CD4-positive, alpha-beta T cell (primary cell): ENCODE measurements at regions of chrX and their contacts with region 1.

Region 1: GRCh38 chrX:56248492-56248891 is 16.3 kb downstream of the KLF8 start:
- DNase-seq: peak; percentile 21 to 74 (median 44)
- ATAC-seq: peak; percentile 78
- H3K4me3 ChIP-seq: no peak overlapping the region
- H3K4me3 Mint-ChIP-seq: no peak overlapping the region
- H3K27ac ChIP-seq: no peak overlapping the region
- H3K27ac Mint-ChIP-seq: no peak overlapping the region
- H3K4me1 ChIP-seq: no peaks in the 10 kb centered on the region
- H3K4me1 Mint-ChIP-seq: peaks cover 11% of the 10 kb centered on the region
- H3K27me3 ChIP-seq: no peaks in the 10 kb centered on the region
- H3K27me3 Mint-ChIP-seq: no peaks in the 10 kb centered on the region
- CTCF ChIP-seq: peak; percentile 64

Region 2: DNA sequence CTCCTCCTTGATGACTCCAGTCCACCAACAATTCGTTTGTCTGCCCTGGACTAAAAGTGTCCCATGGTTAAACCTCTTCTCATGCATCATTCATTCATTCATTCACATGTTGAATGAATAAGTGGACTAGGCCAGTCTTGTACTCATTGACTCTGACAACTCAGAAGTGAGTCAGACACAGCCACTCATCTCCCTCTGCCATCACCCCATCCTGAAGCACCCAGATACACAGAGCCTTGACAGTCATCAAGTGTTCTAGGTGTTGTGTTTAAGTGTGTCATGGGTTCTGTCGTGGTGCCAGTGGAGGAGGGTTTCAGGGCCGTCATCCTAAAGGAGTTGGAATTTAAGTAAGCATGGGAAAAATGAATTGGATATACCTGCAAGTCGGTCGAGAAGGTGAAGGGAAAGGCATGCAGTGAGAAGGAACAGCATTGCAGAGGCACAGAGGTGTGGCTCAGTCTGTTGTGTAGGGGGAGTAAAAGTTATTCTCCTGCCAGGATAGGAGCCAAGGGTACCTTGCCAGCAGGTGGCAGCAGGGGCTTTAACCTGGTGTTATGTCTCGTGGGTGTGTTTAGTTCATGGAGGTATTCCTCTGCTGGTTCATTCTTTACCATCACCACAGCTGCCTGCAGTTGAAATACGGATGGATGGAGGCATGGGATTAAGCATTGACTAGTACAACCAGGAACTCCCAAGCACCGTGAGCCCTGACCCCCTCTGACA is 1422.6 kb before region 1 on chrX:
- CTCF ChIA-PET with region 1: no interaction called
- POLR2A ChIA-PET with region 1: no interaction called
- intact Hi-C with region 1: loop called in 1 of 2 experiments (anchors 10 kb)
- DNase-seq: peak in 12 of 14 experiments; percentile 16 to 47 (median 34)
- ATAC-seq: peak; percentile 71
- H3K4me3 ChIP-seq: no peak overlapping the region
- H3K4me3 Mint-ChIP-seq: no peak overlapping the region
- H3K27ac ChIP-seq: no peak overlapping the region
- H3K27ac Mint-ChIP-seq: no peak overlapping the region
- H3K4me1 ChIP-seq: no peaks in the 10 kb centered on the region
- H3K4me1 Mint-ChIP-seq: no peaks in the 10 kb centered on the region
- H3K27me3 ChIP-seq: no peaks in the 10 kb centered on the region
- H3K27me3 Mint-ChIP-seq: no peaks in the 10 kb centered on the region
- CTCF ChIP-seq: peak; percentile 30

Region 3: GRCh38 chrX:54891573-54891972 is 1356.9 kb before region 1 on chrX:
- CTCF ChIA-PET with region 1: no interaction called
- POLR2A ChIA-PET with region 1: no interaction called
- intact Hi-C with region 1: loop called (anchors 5 to 10 kb)
- DNase-seq: peak in 11 of 14 experiments; percentile 6 to 68 (median 31)
- ATAC-seq: peak; percentile 84
- H3K4me3 ChIP-seq: no peak overlapping the region
- H3K4me3 Mint-ChIP-seq: no peak overlapping the region
- H3K27ac ChIP-seq: no peak overlapping the region
- H3K27ac Mint-ChIP-seq: no peak overlapping the region
- H3K4me1 ChIP-seq: no peaks in the 10 kb centered on the region
- H3K4me1 Mint-ChIP-seq: peaks cover 4% of the 10 kb centered on the region
- H3K27me3 ChIP-seq: peaks cover 0 to 3% of the 10 kb centered on the region in 2 experiments
- H3K27me3 Mint-ChIP-seq: no peaks in the 10 kb centered on the region
- CTCF ChIP-seq: peak; percentile 57

Region 4: GRCh38 chrX:55135171-55135570 is 1113.3 kb before region 1 on chrX:
- CTCF ChIA-PET with region 1: no interaction called
- POLR2A ChIA-PET with region 1: no interaction called
- intact Hi-C with region 1: loop called (anchors 2 to 5 kb)
- DNase-seq: peak in 11 of 14 experiments; percentile 3 to 49 (median 28)
- ATAC-seq: no peak
- H3K4me3 ChIP-seq: no peak overlapping the region
- H3K4me3 Mint-ChIP-seq: no peak overlapping the region
- H3K27ac ChIP-seq: no peak overlapping the region
- H3K27ac Mint-ChIP-seq: no peak overlapping the region
- H3K4me1 ChIP-seq: no peaks in the 10 kb centered on the region
- H3K4me1 Mint-ChIP-seq: no peaks in the 10 kb centered on the region
- H3K27me3 ChIP-seq: no peaks in the 10 kb centered on the region
- H3K27me3 Mint-ChIP-seq: no peaks in the 10 kb centered on the region
- CTCF ChIP-seq: peak; percentile 19

Region 5: GRCh38 chrX:56221101-56221500 is 27.4 kb before region 1 on chrX:
- CTCF ChIA-PET with region 1: no interaction called
- POLR2A ChIA-PET with region 1: no interaction called
- intact Hi-C with region 1: no loop called
- DNase-seq: no peak
- ATAC-seq: no peak
- H3K4me3 ChIP-seq: no peak overlapping the region
- H3K4me3 Mint-ChIP-seq: no peak overlapping the region
- H3K27ac ChIP-seq: no peak overlapping the region
- H3K27ac Mint-ChIP-seq: no peak overlapping the region
- H3K4me1 ChIP-seq: no peaks in the 10 kb centered on the region
- H3K4me1 Mint-ChIP-seq: no peaks in the 10 kb centered on the region
- H3K27me3 ChIP-seq: no peaks in the 10 kb centered on the region
- H3K27me3 Mint-ChIP-seq: no peaks in the 10 kb centered on the region
- CTCF ChIP-seq: no peak

Region 6: DNA sequence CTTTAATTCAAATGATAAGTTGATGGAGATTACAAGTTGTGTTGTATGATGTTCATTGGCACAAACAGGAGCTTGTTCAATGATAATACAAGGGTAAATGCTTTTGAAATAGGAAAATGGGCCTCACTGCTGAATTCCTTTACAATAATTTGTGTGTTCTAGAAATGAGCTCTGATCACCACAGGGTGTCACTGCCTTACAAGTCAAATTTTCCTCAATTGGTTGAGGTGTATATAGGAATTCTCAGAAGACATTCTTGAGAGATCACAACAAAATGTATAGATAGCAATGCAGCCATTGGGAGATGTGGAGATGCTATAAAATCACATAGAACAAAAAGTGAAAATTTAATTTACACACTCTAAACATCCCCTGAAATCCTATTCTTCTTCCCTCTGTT is 33.3 kb after region 1 on chrX:
- CTCF ChIA-PET with region 1: no interaction called
- POLR2A ChIA-PET with region 1: no interaction called
- intact Hi-C with region 1: no loop called
- DNase-seq: peak in 7 of 14 experiments; percentile 2 to 66 (median 38)
- ATAC-seq: peak; percentile 67
- H3K4me3 ChIP-seq: no peak overlapping the region
- H3K4me3 Mint-ChIP-seq: no peak overlapping the region
- H3K27ac ChIP-seq: no peak overlapping the region
- H3K27ac Mint-ChIP-seq: no peak overlapping the region
- H3K4me1 ChIP-seq: no peaks in the 10 kb centered on the region
- H3K4me1 Mint-ChIP-seq: peaks cover 8% of the 10 kb centered on the region
- H3K27me3 ChIP-seq: no peaks in the 10 kb centered on the region
- H3K27me3 Mint-ChIP-seq: no peaks in the 10 kb centered on the region
- CTCF ChIP-seq: peak; percentile 46

Region 7: GRCh38 chrX:56313308-56313707 is 64.8 kb after region 1 on chrX:
- CTCF ChIA-PET with region 1: no interaction called
- POLR2A ChIA-PET with region 1: no interaction called
- intact Hi-C with region 1: no loop called
- DNase-seq: no peak
- ATAC-seq: no peak
- H3K4me3 ChIP-seq: no peak overlapping the region
- H3K4me3 Mint-ChIP-seq: no peak overlapping the region
- H3K27ac ChIP-seq: no peak overlapping the region
- H3K27ac Mint-ChIP-seq: no peak overlapping the region
- H3K4me1 ChIP-seq: no peaks in the 10 kb centered on the region
- H3K4me1 Mint-ChIP-seq: peaks cover 4% of the 10 kb centered on the region
- H3K27me3 ChIP-seq: no peaks in the 10 kb centered on the region
- H3K27me3 Mint-ChIP-seq: no peaks in the 10 kb centered on the region
- CTCF ChIP-seq: no peak